ENCODE measurements at regions of chr16 and their contacts with region 1.

Region 1: DNA sequence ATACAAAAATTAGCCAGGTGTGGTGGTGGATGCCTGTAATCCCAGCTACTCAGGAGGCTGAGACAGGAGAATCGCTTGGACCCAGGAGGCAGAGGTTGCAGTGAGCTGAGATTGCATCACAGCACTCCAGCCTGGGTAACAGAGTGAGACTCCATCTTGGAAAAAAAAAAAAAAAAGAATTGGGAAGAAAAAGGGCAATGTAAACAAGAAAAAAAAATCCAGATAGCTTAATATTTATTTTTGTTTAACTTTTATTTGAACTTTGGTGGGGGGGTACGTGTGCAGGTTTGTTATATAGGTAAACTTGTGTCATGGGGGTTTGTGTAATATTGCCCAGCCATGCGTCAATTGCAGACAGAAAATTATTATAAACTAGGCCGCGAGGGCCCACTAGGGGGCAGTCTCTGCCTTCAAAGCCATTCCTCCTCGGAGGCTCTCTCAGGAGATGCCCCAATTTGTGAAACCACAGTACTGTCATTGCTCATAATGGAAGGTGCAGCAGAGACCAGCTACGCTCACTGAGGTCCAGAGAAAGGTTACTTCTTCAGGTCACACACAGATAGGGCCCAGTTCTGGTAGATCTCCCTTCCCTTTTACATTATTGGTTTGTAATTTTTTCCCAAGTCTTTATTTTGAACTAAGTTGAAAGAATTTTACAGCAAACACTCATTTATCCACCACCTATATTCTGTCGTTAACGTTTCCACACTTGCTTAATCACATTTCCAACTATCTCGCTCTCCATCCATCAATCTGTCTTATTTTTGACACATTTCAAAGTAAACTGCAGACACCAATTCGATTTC is 206.2 kb downstream of the PRKCB start:
- DNase-seq: peak; percentile 84
- H3K4me3 ChIP-seq: no peak overlapping the region
- H3K27ac ChIP-seq: no peak overlapping the region
- H3K4me1 ChIP-seq: peaks cover 0 to 10% (median 0%) of the 10 kb centered on the region in 6 donors
- H3K27me3 ChIP-seq: no peaks in the 10 kb centered on the region
- CTCF ChIP-seq: peak; percentile 27 to 82 (median 65)
- POLR2A ChIP-seq: no peak

Region 2: GRCh38 chr16:24253192-24253591 is 211.2 kb after region 1 on chr16:
- intact Hi-C with region 1: loop called (anchors 5 kb)
- DNase-seq: no peak
- H3K4me3 ChIP-seq: no peak overlapping the region
- H3K27ac ChIP-seq: no peak overlapping the region
- H3K4me1 ChIP-seq: peaks cover 0 to 3% (median 0%) of the 10 kb centered on the region in 6 donors
- H3K27me3 ChIP-seq: peaks cover 0 to 51% (median 32%) of the 10 kb centered on the region in 7 donors
- CTCF ChIP-seq: peak; percentile 11 to 79 (median 57)
- POLR2A ChIP-seq: no peak

Region 3: GRCh38 chr16:24504472-24505345 is 462.7 kb after region 1 on chr16:
- intact Hi-C with region 1: loop called (anchors 5 kb)
- DNase-seq: no peak
- H3K4me3 ChIP-seq: no peak overlapping the region
- H3K27ac ChIP-seq: no peak overlapping the region
- H3K4me1 ChIP-seq: peaks cover 0 to 6% (median 0%) of the 10 kb centered on the region in 6 donors
- H3K27me3 ChIP-seq: peaks cover 0 to 51% (median 4%) of the 10 kb centered on the region in 7 donors
- CTCF ChIP-seq: peak; percentile 40 to 90 (median 70)
- POLR2A ChIP-seq: no peak

Measured in spleen (tissue), 13 donors.